IMR-90 (cell line): ENCODE measurements at regions of chr7 and their contacts with region 1.

Region 1: DNA sequence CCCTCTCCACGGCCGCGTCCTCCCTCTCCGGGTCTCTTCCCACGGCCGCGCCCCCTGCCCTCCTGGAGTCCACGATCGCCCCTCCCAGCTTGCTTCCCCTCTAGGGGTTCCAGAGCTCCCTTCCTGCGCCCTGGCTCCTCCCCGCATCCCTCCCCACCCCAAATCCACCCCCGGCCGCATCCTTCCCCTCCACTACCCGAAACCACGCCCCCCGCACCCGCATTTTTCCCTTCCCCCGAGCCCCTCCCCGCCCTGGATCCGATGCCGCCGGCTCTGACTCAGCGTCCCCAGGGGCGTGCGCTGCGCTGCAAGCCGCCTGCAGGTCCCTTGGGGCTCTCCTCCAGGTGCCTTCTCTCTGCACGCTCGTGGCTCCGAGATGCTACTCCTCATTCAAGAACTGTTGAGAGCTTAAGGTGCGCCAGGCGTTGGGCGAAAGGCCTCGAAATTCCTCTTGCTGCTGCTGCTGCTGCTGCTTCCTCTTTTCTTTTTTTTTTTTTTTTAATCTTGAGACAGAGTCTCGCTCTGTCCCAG is 372 bp upstream of the TMEM130 start:
- DNase-seq: peak; percentile 50
- ATAC-seq: peak; percentile 62
- H3K4me3 ChIP-seq: peak overlapping the region; percentile 62
- H3K27ac ChIP-seq: no peak overlapping the region
- H3K4me1 ChIP-seq: peaks cover 7% of the 10 kb centered on the region
- H3K27me3 ChIP-seq: peaks cover 12% of the 10 kb centered on the region
- CTCF ChIP-seq: no peak
- POLR2A ChIP-seq: no peak
- RAD21 ChIP-seq: no peak

Region 2: GRCh38 chr7:98420966-98421612 is 449.1 kb before region 1 on chr7:
- CTCF ChIA-PET with region 1: interaction called, 3 read pairs
- POLR2A ChIA-PET with region 1: interaction called, 18 read pairs
- dilution Hi-C with region 1: no loop called
- in situ Hi-C with region 1: no loop called
- intact Hi-C with region 1: no loop called
- DNase-seq: no peak
- ATAC-seq: no peak
- H3K4me3 ChIP-seq: no peak overlapping the region
- H3K27ac ChIP-seq: no peak overlapping the region
- H3K4me1 ChIP-seq: peaks cover 14% of the 10 kb centered on the region
- H3K27me3 ChIP-seq: no peaks in the 10 kb centered on the region
- CTCF ChIP-seq: peak; percentile 65
- POLR2A ChIP-seq: no peak
- RAD21 ChIP-seq: peak; percentile 41; the same call in 1 of the 2 replicates

Region 3: DNA sequence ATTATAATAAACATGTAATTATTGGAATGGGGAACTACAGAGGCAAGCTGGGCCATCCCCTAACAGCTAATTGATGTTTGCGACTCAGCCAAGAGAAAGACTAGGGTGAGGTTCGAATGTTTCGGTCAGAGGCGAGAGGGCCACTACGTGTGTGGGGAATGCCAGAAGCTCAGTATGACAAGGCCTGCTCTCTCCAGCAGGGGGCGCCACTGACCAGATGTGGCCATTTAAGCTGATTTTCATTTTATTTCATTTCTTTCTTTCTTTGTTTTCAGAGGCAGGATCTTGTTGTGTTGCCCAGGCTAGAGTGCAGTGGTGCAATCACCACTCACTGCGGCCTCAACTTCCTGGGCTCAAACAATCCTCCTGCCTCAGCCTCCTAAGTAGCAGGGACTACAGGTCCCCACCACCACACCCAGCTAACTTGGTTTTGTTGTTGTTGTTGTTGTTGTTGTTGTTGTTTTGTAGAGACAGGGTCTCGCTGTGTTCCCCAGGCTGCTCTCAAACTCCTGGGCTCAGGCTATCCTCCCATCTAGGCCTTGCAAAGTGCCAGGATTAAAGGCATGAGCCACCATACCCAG is 38.5 kb before region 1 on chr7:
- CTCF ChIA-PET with region 1: interaction called, 4 read pairs
- POLR2A ChIA-PET with region 1: no interaction called
- dilution Hi-C with region 1: no loop called
- in situ Hi-C with region 1: no loop called
- intact Hi-C with region 1: loop called (anchors 1 kb)
- DNase-seq: peak; percentile 27
- ATAC-seq: no peak
- H3K4me3 ChIP-seq: no peak overlapping the region
- H3K27ac ChIP-seq: no peak overlapping the region
- H3K4me1 ChIP-seq: no peaks in the 10 kb centered on the region
- H3K27me3 ChIP-seq: peaks cover 10% of the 10 kb centered on the region
- CTCF ChIP-seq: peak; percentile 59
- POLR2A ChIP-seq: no peak
- RAD21 ChIP-seq: peak; percentile 52

Region 4: DNA sequence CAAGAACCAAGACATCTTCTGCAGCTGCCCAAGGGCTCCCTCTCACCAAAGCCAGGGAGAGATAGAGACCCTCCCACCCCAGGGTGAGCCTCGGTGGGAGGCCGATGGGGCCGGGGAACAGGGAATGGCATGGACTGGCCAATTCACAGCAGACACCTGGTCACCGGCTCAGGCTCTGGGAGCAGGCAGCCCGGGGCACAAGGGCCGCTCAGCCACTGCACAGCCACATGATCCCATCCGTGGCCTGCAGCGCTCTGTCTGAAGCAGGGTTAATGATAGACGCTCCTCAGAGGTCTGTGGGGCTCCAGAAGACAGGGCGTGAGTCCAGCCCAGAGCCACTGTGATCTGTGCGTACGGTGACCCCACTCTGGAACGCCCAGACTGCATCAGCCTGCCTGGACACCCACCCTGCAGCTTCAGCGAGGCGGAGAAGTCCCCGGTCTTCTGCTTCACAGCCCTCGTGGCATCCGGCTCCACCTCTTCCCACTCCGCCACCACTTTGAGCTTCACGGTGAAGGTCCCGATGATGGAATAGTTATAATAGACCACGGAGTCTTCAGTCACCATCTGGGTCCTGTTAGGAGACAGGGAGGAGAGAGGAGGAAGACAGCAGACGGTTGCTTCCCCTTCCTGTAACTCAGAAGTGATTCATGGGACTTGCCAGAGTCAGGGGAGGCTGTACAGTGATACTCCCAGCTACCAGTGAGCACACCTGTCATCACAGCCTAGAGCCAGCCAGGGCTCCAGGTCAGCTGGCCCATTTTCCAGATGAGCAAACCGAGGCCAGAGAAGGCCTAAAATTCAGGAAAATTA is 14.4 kb before region 1 on chr7:
- CTCF ChIA-PET with region 1: no interaction called
- POLR2A ChIA-PET with region 1: interaction called, 10 read pairs
- dilution Hi-C with region 1: no loop called
- in situ Hi-C with region 1: no loop called
- intact Hi-C with region 1: no loop called
- DNase-seq: peak; percentile 48
- ATAC-seq: no peak
- H3K4me3 ChIP-seq: no peak overlapping the region
- H3K27ac ChIP-seq: no peak overlapping the region
- H3K4me1 ChIP-seq: peaks cover 15% of the 10 kb centered on the region
- H3K27me3 ChIP-seq: no peaks in the 10 kb centered on the region
- CTCF ChIP-seq: no peak
- POLR2A ChIP-seq: no peak
- RAD21 ChIP-seq: no peak

Region 5: GRCh38 chr7:98930921-98931320 is 60.7 kb after region 1 on chr7:
- CTCF ChIA-PET with region 1: no interaction called
- POLR2A ChIA-PET with region 1: no interaction called
- dilution Hi-C with region 1: no loop called
- in situ Hi-C with region 1: no loop called
- intact Hi-C with region 1: no loop called
- DNase-seq: peak; percentile 34
- ATAC-seq: no peak
- H3K4me3 ChIP-seq: no peak overlapping the region
- H3K27ac ChIP-seq: no peak overlapping the region
- H3K4me1 ChIP-seq: no peaks in the 10 kb centered on the region; the same call in 1 of the 2 replicates
- H3K27me3 ChIP-seq: no peaks in the 10 kb centered on the region
- CTCF ChIP-seq: no peak
- POLR2A ChIP-seq: no peak
- RAD21 ChIP-seq: no peak

Region 6: DNA sequence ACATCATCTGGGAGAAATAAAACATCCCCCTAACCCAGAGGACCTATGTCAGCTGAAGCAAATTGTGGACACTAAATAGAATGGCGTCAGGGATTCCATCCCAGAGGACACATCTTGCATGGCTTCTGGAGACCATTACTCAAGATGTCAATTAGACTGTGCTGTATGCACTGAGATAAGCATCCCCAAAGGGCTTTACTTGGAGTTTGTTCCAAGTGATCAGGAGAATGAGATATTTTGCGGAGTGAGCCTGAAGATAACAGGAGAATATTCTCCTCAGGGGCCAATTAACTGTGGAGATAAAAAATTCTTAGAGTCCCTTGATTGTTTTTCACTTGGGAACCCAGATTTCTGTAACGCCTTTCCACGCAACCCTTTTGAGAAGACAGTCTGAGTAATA is 1011.2 kb after region 1 on chr7:
- CTCF ChIA-PET with region 1: no interaction called
- POLR2A ChIA-PET with region 1: no interaction called
- dilution Hi-C with region 1: no loop called
- in situ Hi-C with region 1: no loop called
- intact Hi-C with region 1: no loop called
- DNase-seq: no peak
- ATAC-seq: no peak
- H3K4me3 ChIP-seq: no peak overlapping the region
- H3K27ac ChIP-seq: no peak overlapping the region
- H3K4me1 ChIP-seq: no peaks in the 10 kb centered on the region
- H3K27me3 ChIP-seq: no peaks in the 10 kb centered on the region
- CTCF ChIP-seq: no peak
- POLR2A ChIP-seq: no peak
- RAD21 ChIP-seq: no peak